CD4-positive, alpha-beta memory T cell (primary cell): ENCODE measurements at regions of chr6 and their contacts with region 1.

Region 1: GRCh38 chr6:2931970-2932748 is 29.1 kb upstream of the SERPINB9 start:
- DNase-seq: peak; percentile 79 to 87 (median 81)
- H3K4me3 ChIP-seq: no peak overlapping the region
- H3K4me3 Mint-ChIP-seq: peak overlapping the region in 3 of 8 donors; percentile 33 to 53 (median 41)
- H3K27ac ChIP-seq: no peak overlapping the region
- H3K27ac Mint-ChIP-seq: peak overlapping the region in 4 of 7 donors; percentile 4 to 60 (median 41)
- H3K4me1 ChIP-seq: peaks cover 21% of the 10 kb centered on the region
- H3K4me1 Mint-ChIP-seq: peaks cover 18 to 23% (median 22%) of the 10 kb centered on the region in 4 donors
- H3K27me3 ChIP-seq: no peaks in the 10 kb centered on the region
- H3K27me3 Mint-ChIP-seq: no peaks in the 10 kb centered on the region

Region 2: GRCh38 chr6:2738373-2738979 is 193.7 kb before region 1 on chr6:
- CTCF ChIA-PET with region 1: interaction called, 3 read pairs
- POLR2A ChIA-PET with region 1: no interaction called
- intact Hi-C with region 1: loop called (anchors 1 kb)
- DNase-seq: peak; percentile 41 to 65 (median 47)
- H3K4me3 ChIP-seq: no peak overlapping the region
- H3K4me3 Mint-ChIP-seq: no peak overlapping the region
- H3K27ac ChIP-seq: no peak overlapping the region
- H3K27ac Mint-ChIP-seq: no peak overlapping the region
- H3K4me1 ChIP-seq: no peaks in the 10 kb centered on the region
- H3K4me1 Mint-ChIP-seq: no peaks in the 10 kb centered on the region
- H3K27me3 ChIP-seq: no peaks in the 10 kb centered on the region
- H3K27me3 Mint-ChIP-seq: peaks cover 1 to 9% of the 10 kb centered on the region in 2 donors

Region 3: DNA sequence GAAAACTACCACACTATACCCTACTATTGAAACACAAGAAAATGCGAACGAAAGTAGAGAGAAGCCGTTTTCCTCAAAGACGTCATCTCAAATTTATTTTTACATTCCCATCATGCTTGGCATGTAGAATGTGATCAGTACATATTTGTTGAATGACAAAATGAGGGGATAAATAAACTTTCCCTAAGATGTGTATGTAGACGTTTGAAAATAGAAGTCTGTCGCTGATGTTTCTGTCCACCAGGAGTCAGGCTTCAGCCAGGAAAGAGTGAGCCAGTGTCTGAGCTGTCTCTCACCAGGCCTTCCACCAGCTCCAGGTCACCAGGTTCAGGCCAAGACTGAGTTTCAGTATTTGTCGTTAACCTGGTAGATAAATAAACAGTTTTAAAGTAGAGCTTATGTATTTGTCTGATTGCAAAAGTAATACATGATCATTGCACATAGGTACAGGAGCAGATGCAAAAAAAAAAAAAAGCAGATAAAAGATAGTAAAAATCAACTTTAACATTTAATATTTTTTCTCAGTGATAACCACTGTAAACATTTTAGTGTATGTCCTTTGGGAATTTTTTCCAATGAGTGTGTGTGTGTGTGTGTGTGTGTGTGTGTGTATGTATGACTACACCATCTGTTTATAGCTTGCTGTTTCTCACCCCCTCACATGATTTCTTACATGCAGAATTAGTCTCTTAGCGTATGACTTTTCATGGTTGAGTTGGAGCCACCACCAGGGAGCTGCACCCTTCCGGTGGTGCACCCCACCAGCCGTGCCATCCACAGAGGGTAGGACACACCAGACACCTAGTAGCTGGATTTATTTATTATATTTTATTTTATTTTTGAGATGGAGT is 140.8 kb before region 1 on chr6:
- CTCF ChIA-PET with region 1: interaction called, 80 read pairs
- POLR2A ChIA-PET with region 1: interaction called, 4 read pairs
- intact Hi-C with region 1: loop called (anchors 1 kb)
- DNase-seq: peak; percentile 41 to 57 (median 53)
- H3K4me3 ChIP-seq: no peak overlapping the region
- H3K4me3 Mint-ChIP-seq: peak overlapping the region in 6 of 8 donors; percentile 17 to 61 (median 40)
- H3K27ac ChIP-seq: no peak overlapping the region
- H3K27ac Mint-ChIP-seq: peak overlapping the region; percentile 36 to 83 (median 68)
- H3K4me1 ChIP-seq: peaks cover 26% of the 10 kb centered on the region
- H3K4me1 Mint-ChIP-seq: peaks cover 22 to 35% (median 26%) of the 10 kb centered on the region in 4 donors
- H3K27me3 ChIP-seq: no peaks in the 10 kb centered on the region
- H3K27me3 Mint-ChIP-seq: no peaks in the 10 kb centered on the region

Region 4: DNA sequence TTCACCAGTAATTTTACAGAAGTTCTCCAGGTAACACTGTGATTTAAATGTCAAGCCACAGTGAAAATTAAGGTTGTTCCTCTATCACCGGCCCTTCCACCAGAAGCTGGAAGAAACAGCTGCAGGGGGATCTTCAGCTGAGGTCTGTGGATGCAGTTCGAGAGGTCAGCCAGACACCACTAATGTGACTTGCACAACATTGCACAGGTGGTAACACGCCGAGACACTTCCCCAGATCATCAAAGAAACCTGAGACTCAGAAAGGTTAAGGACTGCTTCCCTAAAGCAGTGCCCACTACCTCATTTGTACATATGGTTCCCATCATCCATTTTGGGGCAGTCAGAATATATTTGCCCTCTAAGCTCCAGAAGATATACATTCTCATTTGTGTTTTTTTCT is 21.0 kb before region 1 on chr6:
- CTCF ChIA-PET with region 1: interaction called, 29 read pairs
- POLR2A ChIA-PET with region 1: interaction called, 6 read pairs
- intact Hi-C with region 1: loop called (anchors 1 kb)
- DNase-seq: no peak
- H3K4me3 ChIP-seq: no peak overlapping the region
- H3K4me3 Mint-ChIP-seq: no peak overlapping the region
- H3K27ac ChIP-seq: no peak overlapping the region
- H3K27ac Mint-ChIP-seq: no peak overlapping the region
- H3K4me1 ChIP-seq: peaks cover 6% of the 10 kb centered on the region
- H3K4me1 Mint-ChIP-seq: peaks cover 15 to 31% (median 22%) of the 10 kb centered on the region in 4 donors
- H3K27me3 ChIP-seq: no peaks in the 10 kb centered on the region
- H3K27me3 Mint-ChIP-seq: no peaks in the 10 kb centered on the region

Region 5: GRCh38 chr6:2952557-2953095 is 20.5 kb after region 1 on chr6:
- CTCF ChIA-PET with region 1: interaction called, 14 read pairs
- POLR2A ChIA-PET with region 1: no interaction called
- intact Hi-C with region 1: no loop called
- DNase-seq: peak; percentile 14 to 43 (median 32)
- H3K4me3 ChIP-seq: no peak overlapping the region
- H3K4me3 Mint-ChIP-seq: peak overlapping the region in 1 of 8 donors; percentile 80
- H3K27ac ChIP-seq: no peak overlapping the region
- H3K27ac Mint-ChIP-seq: peak overlapping the region in 4 of 7 donors; percentile 19 to 90 (median 46)
- H3K4me1 ChIP-seq: peaks cover 3% of the 10 kb centered on the region
- H3K4me1 Mint-ChIP-seq: peaks cover 0 to 7% (median 0%) of the 10 kb centered on the region in 4 donors
- H3K27me3 ChIP-seq: no peaks in the 10 kb centered on the region
- H3K27me3 Mint-ChIP-seq: no peaks in the 10 kb centered on the region

Region 6: GRCh38 chr6:3031857-3032640 is 99.9 kb after region 1 on chr6:
- CTCF ChIA-PET with region 1: no interaction called
- POLR2A ChIA-PET with region 1: no interaction called
- intact Hi-C with region 1: no loop called
- DNase-seq: no peak
- H3K4me3 ChIP-seq: no peak overlapping the region
- H3K4me3 Mint-ChIP-seq: no peak overlapping the region
- H3K27ac ChIP-seq: no peak overlapping the region
- H3K27ac Mint-ChIP-seq: peak overlapping the region in 1 of 7 donors; percentile 41
- H3K4me1 ChIP-seq: peaks cover 12% of the 10 kb centered on the region
- H3K4me1 Mint-ChIP-seq: peaks cover 4 to 13% (median 5%) of the 10 kb centered on the region in 4 donors
- H3K27me3 ChIP-seq: no peaks in the 10 kb centered on the region
- H3K27me3 Mint-ChIP-seq: peaks cover 0 to 2% of the 10 kb centered on the region in 2 donors

Region 7: DNA sequence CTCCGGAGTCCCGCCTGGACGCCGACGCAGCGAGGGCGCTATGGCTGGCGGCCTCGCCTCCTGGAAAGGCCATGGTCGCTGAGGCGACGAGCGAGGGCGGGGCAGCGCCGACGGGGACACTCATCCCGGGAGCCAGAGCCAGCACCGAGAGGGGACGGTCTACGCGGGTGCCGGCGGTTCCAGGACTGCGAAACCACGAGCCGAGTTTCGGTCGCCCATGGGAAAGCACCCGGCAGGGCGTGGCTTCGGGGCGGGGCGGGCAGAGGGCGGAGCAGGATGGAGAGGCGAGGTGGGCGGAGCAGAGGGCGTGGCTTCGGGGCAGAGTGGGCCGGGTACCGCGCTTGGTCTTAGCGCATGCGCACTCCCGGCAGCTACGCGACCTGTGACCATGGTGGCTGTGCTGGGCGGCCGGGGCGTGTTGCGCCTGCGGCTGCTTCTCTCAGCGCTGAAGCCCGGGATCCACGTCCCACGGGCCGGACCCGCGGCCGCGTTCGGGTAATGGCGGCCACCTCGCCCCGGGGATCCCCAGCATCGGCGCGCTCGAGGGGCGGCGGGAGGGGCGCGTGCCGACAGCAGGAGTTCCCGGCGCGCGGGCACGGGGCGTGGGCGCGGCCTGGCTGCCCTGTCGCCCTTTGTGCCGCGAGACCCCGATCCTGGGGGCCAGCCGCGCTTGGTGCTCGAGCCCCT is 186.3 kb after region 1 on chr6 and contains the start of gene BPHL:
- CTCF ChIA-PET with region 1: no interaction called
- POLR2A ChIA-PET with region 1: no interaction called
- intact Hi-C with region 1: no loop called
- DNase-seq: peak; percentile 98 to 100 (median 99)
- H3K4me3 ChIP-seq: peak within 1 kb of the TSS; percentile 76 to 94
- H3K4me3 Mint-ChIP-seq: peak within 1 kb of the TSS; percentile 75 to 96 (median 91)
- H3K27ac ChIP-seq: peak within 1 kb of the TSS; percentile 87
- H3K27ac Mint-ChIP-seq: peak within 1 kb of the TSS; percentile 93 to 97 (median 96)
- H3K4me1 ChIP-seq: peaks cover 14% of the 10 kb centered on the region
- H3K4me1 Mint-ChIP-seq: peaks cover 7 to 20% (median 14%) of the 10 kb centered on the region in 4 donors
- H3K27me3 ChIP-seq: no peaks in the 10 kb centered on the region
- H3K27me3 Mint-ChIP-seq: no peaks in the 10 kb centered on the region
- total RNA-seq, gene BPHL: 11.9 to 13.7 TPM